CD8-positive, alpha-beta memory T cell (primary cell): ENCODE measurements at regions of chr1 and their contacts with region 1.

Region 1: DNA sequence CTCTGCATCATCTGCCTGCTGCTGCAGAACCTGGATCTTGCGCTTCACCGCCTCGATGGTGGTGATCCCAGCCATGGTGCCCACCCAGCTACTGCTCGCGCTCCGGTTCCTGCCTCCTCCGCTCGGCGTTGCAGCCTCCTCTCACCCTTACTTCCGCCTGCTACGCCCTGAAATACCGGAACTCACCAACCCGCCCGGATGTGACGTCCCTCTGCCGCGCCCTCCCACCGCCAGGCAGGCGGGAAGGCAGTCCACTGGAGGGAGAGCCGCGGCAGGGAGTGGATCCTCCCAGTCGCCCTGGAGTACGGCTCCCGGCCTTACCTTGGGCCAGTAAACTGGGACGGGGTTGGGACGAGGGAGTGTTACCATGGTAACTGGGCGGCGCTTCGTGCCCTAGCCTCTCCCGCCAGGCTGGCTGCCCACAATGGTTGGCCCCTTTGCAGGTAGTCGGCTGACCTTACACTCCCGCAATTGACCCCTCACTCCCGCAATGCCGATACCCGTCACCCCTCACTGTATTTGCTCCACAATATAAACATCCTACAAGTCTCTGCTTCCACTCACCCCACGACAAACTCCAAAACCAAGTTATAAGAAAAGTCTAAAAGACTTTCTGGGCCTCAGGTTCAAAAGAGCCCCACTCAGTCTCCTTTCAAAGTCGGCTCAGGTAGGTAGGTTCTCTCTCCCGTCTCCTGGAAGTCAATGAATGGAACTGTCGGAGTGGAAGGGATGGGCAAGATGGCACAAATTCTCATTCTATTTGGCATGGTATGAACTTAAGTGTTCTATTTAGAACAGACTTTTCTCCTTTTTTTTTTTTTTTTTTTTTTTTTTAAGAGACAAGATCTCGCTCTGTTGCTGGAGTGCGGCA is 8.6 kb downstream of the TPM3 start:
- DNase-seq: peak; percentile 90 to 95 (median 93)
- H3K4me3 ChIP-seq: peak overlapping the region; percentile 85
- H3K4me3 Mint-ChIP-seq: peak overlapping the region; percentile 100
- H3K27ac ChIP-seq: peak overlapping the region; percentile 92
- H3K27ac Mint-ChIP-seq: peak overlapping the region; percentile 94 to 100 (median 100)
- H3K4me1 ChIP-seq: peaks cover 43% of the 10 kb centered on the region
- H3K4me1 Mint-ChIP-seq: peaks cover 41 to 51% (median 49%) of the 10 kb centered on the region in 3 donors
- H3K27me3 ChIP-seq: no peaks in the 10 kb centered on the region
- H3K27me3 Mint-ChIP-seq: peaks cover 0 to 7% of the 10 kb centered on the region in 2 donors

Region 2: GRCh38 chr1:154062309-154062708 is 121.0 kb before region 1 on chr1:
- CTCF ChIA-PET with region 1: no interaction called
- POLR2A ChIA-PET with region 1: no interaction called
- DNase-seq: no peak
- H3K4me3 ChIP-seq: no peak overlapping the region
- H3K4me3 Mint-ChIP-seq: no peak overlapping the region
- H3K27ac ChIP-seq: no peak overlapping the region
- H3K27ac Mint-ChIP-seq: peak overlapping the region in 1 of 8 donors; percentile 10
- H3K4me1 ChIP-seq: no peaks in the 10 kb centered on the region
- H3K4me1 Mint-ChIP-seq: no peaks in the 10 kb centered on the region
- H3K27me3 ChIP-seq: no peaks in the 10 kb centered on the region
- H3K27me3 Mint-ChIP-seq: peaks cover 14 to 16% of the 10 kb centered on the region in 2 donors

Region 3: GRCh38 chr1:154220071-154220969 is 37.0 kb after region 1 on chr1 and contains the start of gene UBAP2L:
- CTCF ChIA-PET with region 1: no interaction called
- POLR2A ChIA-PET with region 1: interaction called, 13 read pairs
- DNase-seq: peak; percentile 98 to 99 (median 99)
- H3K4me3 ChIP-seq: peak within 1 kb of the TSS; percentile 91
- H3K4me3 Mint-ChIP-seq: peak within 1 kb of the TSS; percentile 88 to 99 (median 98)
- H3K27ac ChIP-seq: peak within 1 kb of the TSS; percentile 98
- H3K27ac Mint-ChIP-seq: peak within 1 kb of the TSS; percentile 89 to 100 (median 100)
- H3K4me1 ChIP-seq: peaks cover 53% of the 10 kb centered on the region
- H3K4me1 Mint-ChIP-seq: peaks cover 66 to 80% (median 75%) of the 10 kb centered on the region in 3 donors
- H3K27me3 ChIP-seq: no peaks in the 10 kb centered on the region
- H3K27me3 Mint-ChIP-seq: no peaks in the 10 kb centered on the region
- total RNA-seq, gene UBAP2L: 258 to 277 TPM